ENCODE measurements at regions of chr3 and their contacts with region 1.

Region 1: DNA sequence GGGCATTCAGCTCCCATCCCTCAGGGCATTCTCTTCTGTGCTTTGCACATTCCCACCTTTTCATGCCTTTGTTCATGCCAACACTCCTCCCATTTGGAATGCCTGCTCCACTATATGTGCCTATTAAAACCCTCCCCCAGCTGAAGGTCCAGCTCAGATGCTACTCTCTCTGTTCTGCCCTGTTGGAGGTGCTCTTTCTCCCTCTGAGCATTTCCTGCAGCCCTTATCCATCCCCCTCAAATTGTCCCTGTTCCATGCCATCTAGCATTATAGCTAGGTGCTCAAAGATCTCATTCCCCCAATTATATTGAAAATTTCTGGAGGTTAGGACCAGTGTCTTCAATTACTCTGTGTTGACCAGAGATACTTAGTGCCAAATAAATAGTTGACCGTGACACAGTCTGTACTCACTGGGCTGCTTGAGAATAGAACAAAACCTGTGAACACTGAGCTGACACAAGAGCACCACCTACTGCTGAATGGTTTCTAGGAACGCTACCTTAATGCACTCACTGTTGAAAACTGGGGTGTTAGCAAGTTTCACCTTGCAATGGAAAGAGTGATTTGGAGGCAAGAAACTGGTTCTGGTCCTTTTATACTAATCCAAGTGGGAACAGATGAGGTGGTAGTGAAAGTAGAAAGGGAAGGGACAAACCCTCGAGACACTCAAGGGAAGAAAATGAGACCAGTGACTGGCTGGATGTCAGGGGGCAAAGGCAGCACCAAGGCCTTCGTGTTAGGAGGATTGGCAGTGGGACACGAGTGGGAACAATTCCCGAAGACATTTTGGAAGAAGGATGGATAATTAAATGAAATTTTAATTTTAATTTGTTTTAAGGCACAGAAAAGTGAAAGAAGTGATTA is 289.8 kb upstream of the ROPN1 start:
- DNase-seq: no peak
- H3K4me3 ChIP-seq: no peak overlapping the region
- H3K27ac ChIP-seq: no peak overlapping the region
- H3K4me1 ChIP-seq: peaks cover 2 to 6% of the 10 kb centered on the region in 2 donors
- H3K27me3 ChIP-seq: no peaks in the 10 kb centered on the region
- CTCF ChIP-seq: peak in 1 of 3 donors; percentile 23
- POLR2A ChIP-seq: no peak

Region 2: DNA sequence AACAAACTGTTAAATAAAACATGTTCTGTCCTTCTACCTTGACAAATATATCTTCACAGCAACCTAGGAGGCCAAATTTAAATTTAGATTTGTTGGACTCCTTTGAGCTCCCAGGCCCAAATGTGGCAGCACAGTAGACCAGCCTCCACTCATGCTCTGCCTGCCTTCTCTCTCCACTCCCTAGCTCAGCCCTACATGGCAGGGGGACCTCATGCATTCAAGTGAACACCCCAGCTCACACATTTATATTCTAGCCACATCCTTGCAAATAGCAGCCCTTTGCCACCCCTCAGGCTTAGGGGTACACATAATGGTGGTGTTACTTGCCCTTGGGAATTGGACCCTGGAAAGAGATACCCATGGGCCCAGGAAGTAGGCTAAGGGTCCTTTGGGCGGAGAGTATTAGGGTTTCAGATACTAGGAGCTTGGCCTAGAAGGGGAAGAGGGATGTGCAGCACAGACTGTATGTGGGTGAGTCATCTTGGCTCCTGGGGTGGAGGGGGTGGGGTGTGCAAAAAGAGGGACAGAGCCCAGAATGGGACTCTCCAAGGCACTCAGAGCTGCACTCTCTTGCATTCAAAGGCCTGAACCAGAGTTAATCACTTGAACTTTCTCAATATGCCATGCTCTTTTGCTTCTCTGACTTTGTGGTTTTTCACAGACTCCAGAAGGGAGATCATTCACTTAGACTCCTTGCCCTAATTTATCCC is 21.3 kb before region 1 on chr3:
- intact Hi-C with region 1: loop called (anchors 1 kb)
- DNase-seq: no peak
- H3K4me3 ChIP-seq: no peak overlapping the region
- H3K27ac ChIP-seq: peak overlapping the region in 1 of 2 donors; percentile 60
- H3K4me1 ChIP-seq: no peaks in the 10 kb centered on the region
- H3K27me3 ChIP-seq: no peaks in the 10 kb centered on the region
- CTCF ChIP-seq: no peak
- POLR2A ChIP-seq: no peak

Region 3: GRCh38 chr3:124298726-124299350 is 17.2 kb after region 1 on chr3:
- intact Hi-C with region 1: no loop called
- DNase-seq: no peak
- H3K4me3 ChIP-seq: no peak overlapping the region
- H3K27ac ChIP-seq: no peak overlapping the region
- H3K4me1 ChIP-seq: no peaks in the 10 kb centered on the region
- H3K27me3 ChIP-seq: no peaks in the 10 kb centered on the region
- CTCF ChIP-seq: no peak
- POLR2A ChIP-seq: no peak